Activated naive CD4-positive, alpha-beta T cell treated with anti-CD3 and anti-CD28 coated beads for 36 hours (primary cell): ENCODE measurements at regions of chr3 and their contacts with region 1.

Region 1: GRCh38 chr3:138174421-138175122 is at the start of gene DBR1:
- DNase-seq: peak; percentile 89
- H3K4me3 Mint-ChIP-seq: peak within 1 kb of the TSS; percentile 97
- H3K27ac Mint-ChIP-seq: peak within 1 kb of the TSS; percentile 97
- H3K4me1 Mint-ChIP-seq: peaks cover 37% of the 10 kb centered on the region
- H3K27me3 Mint-ChIP-seq: no peaks in the 10 kb centered on the region
- total RNA-seq, gene DBR1: 20.0 to 22.3 TPM

Region 2: GRCh38 chr3:138051946-138052802 is 122.4 kb before region 1 on chr3:
- CTCF ChIA-PET with region 1: no interaction called
- intact Hi-C with region 1: no loop called
- DNase-seq: peak; percentile 48
- H3K4me3 Mint-ChIP-seq: no peak overlapping the region
- H3K27ac Mint-ChIP-seq: no peak overlapping the region
- H3K4me1 Mint-ChIP-seq: no peaks in the 10 kb centered on the region
- H3K27me3 Mint-ChIP-seq: peaks cover 24% of the 10 kb centered on the region

Region 3: DNA sequence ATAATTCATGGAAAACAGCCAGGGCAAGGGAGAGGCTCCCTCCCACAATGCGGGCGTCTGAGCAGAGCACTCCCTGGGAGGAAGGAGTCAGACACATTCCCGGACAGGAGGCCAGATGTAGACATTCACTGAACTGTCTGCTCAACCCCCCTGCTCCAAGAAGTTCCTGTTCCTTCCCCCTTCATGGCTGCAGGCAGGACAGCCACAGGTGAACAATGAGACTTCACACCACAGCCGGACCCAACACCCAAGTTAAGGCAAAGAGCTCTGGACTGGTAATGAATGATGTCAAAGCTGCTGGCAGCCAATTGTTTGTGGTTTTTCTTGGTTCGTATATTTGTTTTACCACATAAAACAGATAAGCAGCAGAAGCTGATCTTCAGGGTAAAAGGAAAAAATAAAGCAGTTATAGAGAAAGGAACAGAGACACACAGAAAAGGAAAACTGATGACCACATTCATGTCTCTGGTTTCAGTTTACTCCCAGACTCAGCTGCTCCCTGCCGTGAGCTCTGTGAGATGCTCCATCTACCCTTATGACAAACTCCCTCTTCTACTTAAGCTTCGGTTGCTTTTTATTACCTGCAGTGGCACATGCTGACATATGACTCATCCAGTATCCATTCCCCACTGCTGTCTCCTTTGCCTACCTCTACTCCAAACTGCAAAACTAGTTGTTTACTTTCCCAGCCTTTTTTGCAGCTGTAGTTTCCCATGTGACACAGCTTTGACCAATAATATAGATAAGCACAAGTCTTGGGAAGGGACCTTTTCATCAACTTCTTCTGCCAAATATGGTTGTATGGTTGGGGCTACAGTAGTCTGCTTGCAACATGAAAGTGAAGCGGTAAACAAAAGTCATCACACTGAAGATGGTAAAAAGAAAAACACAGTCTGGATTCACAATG is 92.2 kb before region 1 on chr3:
- CTCF ChIA-PET with region 1: no interaction called
- intact Hi-C with region 1: loop called (anchors 1 kb)
- DNase-seq: peak; percentile 29
- H3K4me3 Mint-ChIP-seq: peak overlapping the region; percentile 36
- H3K27ac Mint-ChIP-seq: peak overlapping the region; percentile 63
- H3K4me1 Mint-ChIP-seq: peaks cover 29% of the 10 kb centered on the region
- H3K27me3 Mint-ChIP-seq: peaks cover 9% of the 10 kb centered on the region

Region 4: DNA sequence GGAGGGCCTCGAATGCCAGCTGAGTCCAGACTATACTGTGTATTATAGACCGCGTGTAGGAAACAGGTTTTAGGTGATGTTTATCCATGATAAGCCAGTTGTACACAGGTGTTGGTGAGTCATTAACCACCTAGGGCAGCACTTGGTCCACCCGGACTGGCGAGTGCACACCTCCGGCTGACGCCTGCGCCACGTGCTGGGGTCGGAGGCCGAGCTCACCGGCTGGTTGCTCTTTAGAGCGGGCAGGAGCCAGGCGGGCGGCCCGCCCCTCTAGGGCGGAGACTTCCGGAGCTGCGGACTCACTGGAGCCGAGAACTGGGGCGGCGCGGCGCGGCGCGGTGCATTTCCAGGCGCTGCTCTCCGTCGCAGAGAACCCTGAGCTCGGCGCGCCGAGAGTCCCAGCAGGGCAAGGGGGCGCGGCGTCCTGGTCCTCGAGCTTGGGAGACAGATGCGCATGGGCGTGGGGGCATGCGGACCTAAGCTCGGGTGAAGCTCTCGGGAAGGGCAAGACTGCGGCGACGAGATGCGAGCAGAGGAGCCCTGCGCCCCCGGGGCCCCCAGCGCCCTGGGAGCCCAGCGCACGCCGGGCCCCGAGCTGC is 259.8 kb after region 1 on chr3 and contains the start of gene ESYT3:
- CTCF ChIA-PET with region 1: no interaction called
- intact Hi-C with region 1: loop called (anchors 2 kb)
- DNase-seq: peak; percentile 82
- H3K4me3 Mint-ChIP-seq: peak within 1 kb of the TSS; percentile 75
- H3K27ac Mint-ChIP-seq: no peak within 1 kb of the TSS
- H3K4me1 Mint-ChIP-seq: peaks cover 11% of the 10 kb centered on the region
- H3K27me3 Mint-ChIP-seq: peaks cover 55% of the 10 kb centered on the region
- total RNA-seq, gene ESYT3: 0.96 to 1.1 TPM

Region 5: DNA sequence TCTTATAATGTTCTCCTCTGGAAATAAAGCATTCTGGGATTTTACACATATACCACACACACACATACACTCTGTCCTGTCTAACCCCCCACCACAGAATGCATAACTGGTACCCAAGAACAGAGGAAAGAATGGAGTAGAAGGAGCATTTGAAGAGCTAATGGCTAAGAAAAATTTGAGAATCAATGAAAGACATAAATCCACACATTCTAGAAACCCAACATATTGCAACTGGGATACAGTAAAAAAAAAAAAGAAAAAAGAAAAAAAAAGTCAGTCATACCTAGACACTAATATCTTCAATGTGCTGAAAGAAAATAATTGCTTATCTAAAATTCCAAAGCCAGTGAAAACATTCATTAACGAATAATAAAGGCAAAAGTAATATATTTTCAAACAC is 398.6 kb after region 1 on chr3:
- CTCF ChIA-PET with region 1: no interaction called
- intact Hi-C with region 1: loop called (anchors 5 kb)
- DNase-seq: no peak
- H3K4me3 Mint-ChIP-seq: no peak overlapping the region
- H3K27ac Mint-ChIP-seq: no peak overlapping the region
- H3K4me1 Mint-ChIP-seq: peaks cover 28% of the 10 kb centered on the region
- H3K27me3 Mint-ChIP-seq: no peaks in the 10 kb centered on the region